ENCODE measurements at regions of chr3 and their contacts with region 1.

Region 1: DNA sequence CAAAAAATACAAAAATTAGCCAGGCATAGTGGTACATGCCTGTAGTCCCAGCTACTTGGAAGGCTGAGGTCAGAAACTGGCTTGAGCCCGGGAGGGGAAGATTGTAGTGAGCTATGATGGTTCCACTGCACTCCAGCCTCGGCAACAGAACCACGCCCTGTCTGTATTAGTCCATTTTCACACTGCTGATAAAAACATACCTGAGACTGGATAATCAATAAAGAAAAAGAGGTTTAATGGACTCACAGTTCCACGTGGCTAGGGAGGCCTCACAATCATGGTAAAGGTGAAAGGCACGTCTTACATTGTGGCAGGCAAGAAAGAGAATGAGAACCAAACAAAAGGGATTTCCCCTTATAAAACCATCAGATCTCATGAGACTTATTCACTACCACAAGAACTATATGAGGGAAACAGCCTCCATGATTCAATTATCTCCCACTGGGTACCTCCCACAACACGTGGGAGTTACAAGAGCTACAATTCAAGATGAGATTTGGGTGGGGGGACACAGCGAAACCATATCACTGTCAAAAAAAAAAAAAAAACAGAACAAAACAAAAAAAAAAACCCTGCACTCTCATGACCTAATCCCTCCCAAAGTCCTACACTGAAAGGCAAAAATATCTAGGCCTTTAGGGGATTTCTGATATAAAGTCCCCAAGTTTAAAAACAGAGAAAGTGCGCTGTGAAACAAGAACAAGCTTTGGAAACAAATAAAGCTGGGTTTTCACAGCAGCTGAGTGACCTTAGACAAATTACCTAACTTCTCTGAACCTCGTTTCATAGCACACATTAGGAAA is 224.7 kb downstream of the IGSF11 start:
- DNase-seq: no peak
- H3K4me3 ChIP-seq: no peak overlapping the region
- H3K27ac ChIP-seq: no peak overlapping the region
- H3K4me1 ChIP-seq: no peaks in the 10 kb centered on the region
- H3K27me3 ChIP-seq: peaks cover 0 to 9% (median 0%) of the 10 kb centered on the region in 4 donors
- CTCF ChIP-seq: no peak
- POLR2A ChIP-seq: no peak

Region 2: DNA sequence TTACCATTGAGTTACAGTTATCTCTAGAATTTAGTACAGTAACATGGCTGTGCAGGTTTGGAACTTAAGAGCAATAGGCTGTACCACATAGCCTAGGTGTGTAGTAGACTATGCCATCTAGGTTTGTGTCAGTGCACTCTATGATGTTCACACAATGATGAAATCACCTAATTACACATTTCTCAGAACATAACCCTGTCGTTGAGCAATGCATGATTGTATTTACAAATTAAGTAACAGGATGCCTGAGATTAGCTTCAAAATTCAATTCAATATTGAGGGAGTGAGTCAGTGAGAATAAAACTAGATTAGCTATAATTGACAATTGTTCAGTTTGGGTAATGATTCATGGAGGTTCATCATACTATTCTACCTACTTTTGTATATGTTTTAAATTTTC is 409.0 kb before region 1 on chr3:
- intact Hi-C with region 1: loop called (anchors 5 kb)
- DNase-seq: no peak
- H3K4me3 ChIP-seq: no peak overlapping the region
- H3K27ac ChIP-seq: no peak overlapping the region
- H3K4me1 ChIP-seq: no peaks in the 10 kb centered on the region
- H3K27me3 ChIP-seq: no peaks in the 10 kb centered on the region
- CTCF ChIP-seq: no peak
- POLR2A ChIP-seq: no peak

Region 3: GRCh38 chr3:118557513-118558257 is 252.2 kb before region 1 on chr3:
- intact Hi-C with region 1: no loop called
- DNase-seq: no peak
- H3K4me3 ChIP-seq: no peak overlapping the region
- H3K27ac ChIP-seq: no peak overlapping the region
- H3K4me1 ChIP-seq: no peaks in the 10 kb centered on the region
- H3K27me3 ChIP-seq: no peaks in the 10 kb centered on the region
- CTCF ChIP-seq: no peak
- POLR2A ChIP-seq: no peak

Region 4: DNA sequence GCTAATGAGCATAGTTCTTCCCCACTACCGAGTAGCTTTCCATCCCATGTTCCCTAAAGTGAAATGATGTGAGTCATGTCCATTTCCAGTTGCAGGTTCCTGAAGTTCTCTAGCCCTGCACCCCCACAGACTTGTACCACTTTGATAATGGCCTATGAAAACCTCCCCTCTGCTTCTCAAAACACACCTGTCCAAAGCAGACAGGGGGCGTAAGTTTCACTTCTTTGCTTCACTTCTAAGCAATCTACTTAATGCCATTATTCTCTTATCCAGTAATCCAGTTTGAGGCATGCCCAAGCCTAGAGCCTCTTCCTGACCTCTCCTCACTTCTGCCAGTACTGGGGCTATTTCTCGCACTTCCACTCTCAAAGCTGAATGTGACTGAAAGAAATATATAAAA is 80.4 kb before region 1 on chr3:
- intact Hi-C with region 1: no loop called
- DNase-seq: no peak
- H3K4me3 ChIP-seq: no peak overlapping the region
- H3K27ac ChIP-seq: no peak overlapping the region
- H3K4me1 ChIP-seq: no peaks in the 10 kb centered on the region
- H3K27me3 ChIP-seq: no peaks in the 10 kb centered on the region
- CTCF ChIP-seq: no peak
- POLR2A ChIP-seq: no peak

Region 5: GRCh38 chr3:118960876-118961450 is 151.1 kb after region 1 on chr3:
- intact Hi-C with region 1: no loop called
- DNase-seq: no peak
- H3K4me3 ChIP-seq: no peak overlapping the region
- H3K27ac ChIP-seq: peak overlapping the region in 1 of 4 donors; percentile 23
- H3K4me1 ChIP-seq: peaks cover 0 to 21% (median 0%) of the 10 kb centered on the region in 3 donors
- H3K27me3 ChIP-seq: no peaks in the 10 kb centered on the region
- CTCF ChIP-seq: no peak
- POLR2A ChIP-seq: no peak

Region 6: DNA sequence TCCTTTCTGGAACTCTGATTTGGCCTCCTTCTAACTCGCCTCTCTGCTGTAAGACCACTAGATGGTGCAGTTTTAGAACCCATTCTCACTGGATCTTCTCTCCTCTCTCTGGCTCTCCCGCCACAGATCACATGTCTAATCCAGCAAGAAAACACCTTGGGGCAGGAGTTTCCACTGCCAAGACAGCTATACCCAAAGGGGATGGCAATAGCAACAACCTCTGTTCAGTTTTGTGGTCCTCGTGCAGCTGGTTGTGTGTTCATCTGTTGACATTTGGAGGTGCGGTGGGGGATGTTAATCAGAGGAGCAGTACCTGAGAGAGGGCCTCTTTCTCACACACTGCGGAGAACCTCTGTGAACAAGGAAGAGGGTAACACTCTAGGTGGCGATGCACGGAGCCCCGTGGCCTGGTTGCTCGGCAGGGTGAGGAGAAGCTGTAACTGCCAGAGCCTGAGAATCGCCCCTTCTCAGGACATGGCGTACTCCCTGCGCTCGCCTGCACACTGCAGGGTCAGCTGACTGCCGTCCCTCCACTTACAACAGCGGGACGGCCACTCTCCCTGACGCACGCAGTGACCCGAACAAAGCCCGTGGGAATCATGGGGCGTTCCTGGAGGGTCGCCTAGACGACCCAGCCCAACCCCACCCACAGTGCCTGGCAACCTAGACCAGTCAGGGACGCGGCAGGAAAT is 335.7 kb after region 1 on chr3 and contains the start of gene TEX55:
- intact Hi-C with region 1: no loop called
- DNase-seq: no peak
- H3K4me3 ChIP-seq: no peak within 1 kb of the TSS
- H3K27ac ChIP-seq: no peak within 1 kb of the TSS
- H3K4me1 ChIP-seq: peaks cover 0 to 4% (median 0%) of the 10 kb centered on the region in 3 donors
- H3K27me3 ChIP-seq: no peaks in the 10 kb centered on the region
- CTCF ChIP-seq: peak in 5 of 6 experiments; percentile 40 to 64 (median 42)
- POLR2A ChIP-seq: no peak
- total RNA-seq, gene TEX55: not detected